ENCODE measurements at regions of chr1 and their contacts with region 1.

Region 1: GRCh38 chr1:205750138-205751035 is at the start of gene NUCKS1:
- DNase-seq: peak; percentile 91 to 99 (median 96)
- ATAC-seq: peak; percentile 77
- H3K4me3 ChIP-seq: peak within 1 kb of the TSS; percentile 78 to 91
- H3K4me3 Mint-ChIP-seq: peak within 1 kb of the TSS; percentile 93
- H3K27ac ChIP-seq: peak within 1 kb of the TSS; percentile 79 to 82
- H3K27ac Mint-ChIP-seq: peak within 1 kb of the TSS; percentile 98
- H3K4me1 ChIP-seq: peaks cover 30% of the 10 kb centered on the region
- H3K4me1 Mint-ChIP-seq: peaks cover 37% of the 10 kb centered on the region
- H3K27me3 ChIP-seq: no peaks in the 10 kb centered on the region
- H3K27me3 Mint-ChIP-seq: no peaks in the 10 kb centered on the region
- CTCF ChIP-seq: no peak
- total RNA-seq, gene NUCKS1: 70.5 to 95.3 TPM

Region 2: DNA sequence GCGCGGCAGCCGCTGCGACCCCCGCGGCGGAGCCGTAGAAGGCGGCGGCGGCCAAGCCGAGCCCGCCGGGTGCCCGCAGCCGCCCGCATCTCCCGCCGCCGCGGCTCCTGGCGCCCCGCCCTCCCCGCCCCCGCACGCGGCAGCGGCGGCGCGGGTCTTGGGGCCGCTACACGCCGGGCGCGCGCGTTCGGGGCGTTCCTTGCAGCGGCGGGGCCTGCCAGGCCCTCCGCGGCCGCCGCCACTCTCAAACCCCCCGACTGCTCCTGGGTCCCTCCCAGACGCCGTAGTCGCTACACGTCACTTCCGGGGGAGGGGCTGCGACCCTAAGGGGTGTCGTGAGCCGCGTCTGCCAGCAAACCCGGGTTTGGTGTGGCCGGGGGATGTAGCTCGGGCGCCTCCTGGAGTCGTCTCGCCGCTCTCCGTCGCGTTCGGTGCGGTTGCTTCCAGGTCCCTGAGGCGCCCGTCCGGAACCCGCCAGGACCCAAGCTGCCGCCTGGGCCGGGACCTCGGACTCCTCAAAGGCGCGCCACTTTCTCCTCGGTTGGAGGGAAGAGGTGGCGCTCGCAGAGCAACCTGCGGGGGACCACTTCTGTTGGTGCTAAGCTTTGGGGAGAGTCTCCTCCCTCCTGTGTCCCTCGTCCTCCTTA is 118.5 kb before region 1 on chr1 and contains the start of gene ELK4:
- CTCF ChIA-PET with region 1: no interaction called
- POLR2A ChIA-PET with region 1: interaction called, 4 read pairs
- intact Hi-C with region 1: loop called (anchors 1 kb)
- DNase-seq: peak; percentile 99 to 100 (median 100)
- ATAC-seq: peak; percentile 78
- H3K4me3 ChIP-seq: peak within 1 kb of the TSS; percentile 64 to 71
- H3K4me3 Mint-ChIP-seq: peak within 1 kb of the TSS; percentile 89
- H3K27ac ChIP-seq: peak within 1 kb of the TSS; percentile 75 to 95
- H3K27ac Mint-ChIP-seq: peak within 1 kb of the TSS; percentile 99
- H3K4me1 ChIP-seq: peaks cover 37% of the 10 kb centered on the region
- H3K4me1 Mint-ChIP-seq: peaks cover 44% of the 10 kb centered on the region
- H3K27me3 ChIP-seq: no peaks in the 10 kb centered on the region
- H3K27me3 Mint-ChIP-seq: no peaks in the 10 kb centered on the region
- CTCF ChIP-seq: peak; percentile 78
- total RNA-seq, gene ELK4: 142 to 147 TPM

Region 3: GRCh38 chr1:205645519-205645918 is 104.9 kb before region 1 on chr1:
- CTCF ChIA-PET with region 1: no interaction called
- POLR2A ChIA-PET with region 1: no interaction called
- intact Hi-C with region 1: no loop called
- DNase-seq: no peak
- ATAC-seq: no peak
- H3K4me3 ChIP-seq: no peak overlapping the region
- H3K4me3 Mint-ChIP-seq: no peak overlapping the region
- H3K27ac ChIP-seq: no peak overlapping the region
- H3K27ac Mint-ChIP-seq: no peak overlapping the region
- H3K4me1 ChIP-seq: no peaks in the 10 kb centered on the region
- H3K4me1 Mint-ChIP-seq: no peaks in the 10 kb centered on the region
- H3K27me3 ChIP-seq: no peaks in the 10 kb centered on the region
- H3K27me3 Mint-ChIP-seq: peaks cover 8% of the 10 kb centered on the region
- CTCF ChIP-seq: no peak

Region 4: GRCh38 chr1:205711104-205712020 is 39.0 kb before region 1 on chr1:
- CTCF ChIA-PET with region 1: interaction called, 6 read pairs
- POLR2A ChIA-PET with region 1: no interaction called
- intact Hi-C with region 1: loop called in 1 of 2 experiments (anchors 1 kb)
- DNase-seq: peak in 8 of 9 experiments; percentile 34 to 86 (median 66)
- ATAC-seq: peak; percentile 95
- H3K4me3 ChIP-seq: no peak overlapping the region
- H3K4me3 Mint-ChIP-seq: no peak overlapping the region
- H3K27ac ChIP-seq: no peak overlapping the region
- H3K27ac Mint-ChIP-seq: no peak overlapping the region
- H3K4me1 ChIP-seq: no peaks in the 10 kb centered on the region
- H3K4me1 Mint-ChIP-seq: peaks cover 13% of the 10 kb centered on the region
- H3K27me3 ChIP-seq: no peaks in the 10 kb centered on the region
- H3K27me3 Mint-ChIP-seq: no peaks in the 10 kb centered on the region
- CTCF ChIP-seq: peak; percentile 90

Region 5: DNA sequence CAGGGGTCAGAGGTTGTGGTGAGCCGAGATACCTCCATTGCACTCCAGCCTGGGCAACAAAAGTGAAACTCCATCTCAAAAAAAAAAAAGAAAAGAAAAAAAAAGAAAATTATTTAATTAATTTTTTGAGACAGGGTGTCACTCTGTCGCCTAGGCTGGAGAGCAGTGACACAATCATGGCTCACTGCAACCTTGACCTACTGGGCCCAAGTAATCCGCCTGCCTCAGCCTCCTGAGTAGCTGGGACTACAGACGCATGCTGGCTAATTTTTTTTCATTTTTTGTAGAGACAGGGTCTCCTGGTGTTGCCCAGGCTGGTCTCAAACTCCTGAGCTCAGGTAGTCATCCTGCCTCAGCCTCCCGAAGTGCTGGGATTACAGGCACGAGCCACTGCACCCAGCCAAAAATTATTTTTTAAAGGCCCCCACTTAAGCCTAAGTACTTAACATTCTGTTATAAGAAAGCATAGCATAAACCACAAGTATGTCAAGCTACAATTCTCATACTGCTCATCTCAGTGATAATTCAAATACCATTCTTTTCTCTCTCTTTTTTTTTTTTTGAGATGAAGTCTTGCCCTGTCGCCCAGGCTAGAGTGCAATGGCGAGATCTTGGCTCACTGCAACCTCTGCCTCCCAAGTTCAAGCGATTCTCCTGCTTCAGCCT is 20.3 kb before region 1 on chr1:
- CTCF ChIA-PET with region 1: interaction called, 4 read pairs
- POLR2A ChIA-PET with region 1: interaction called, 12 read pairs
- intact Hi-C with region 1: no loop called
- DNase-seq: no peak
- ATAC-seq: no peak
- H3K4me3 ChIP-seq: no peak overlapping the region
- H3K4me3 Mint-ChIP-seq: no peak overlapping the region
- H3K27ac ChIP-seq: no peak overlapping the region
- H3K27ac Mint-ChIP-seq: no peak overlapping the region
- H3K4me1 ChIP-seq: peaks cover 3% of the 10 kb centered on the region
- H3K4me1 Mint-ChIP-seq: peaks cover 55% of the 10 kb centered on the region
- H3K27me3 ChIP-seq: no peaks in the 10 kb centered on the region
- H3K27me3 Mint-ChIP-seq: no peaks in the 10 kb centered on the region
- CTCF ChIP-seq: no peak

Region 6: GRCh38 chr1:205766038-205766437 is 15.7 kb after region 1 on chr1:
- CTCF ChIA-PET with region 1: no interaction called
- POLR2A ChIA-PET with region 1: interaction called, 13 read pairs
- intact Hi-C with region 1: no loop called
- DNase-seq: no peak
- ATAC-seq: no peak
- H3K4me3 ChIP-seq: no peak overlapping the region
- H3K4me3 Mint-ChIP-seq: no peak overlapping the region
- H3K27ac ChIP-seq: no peak overlapping the region
- H3K27ac Mint-ChIP-seq: peak overlapping the region; percentile 75
- H3K4me1 ChIP-seq: no peaks in the 10 kb centered on the region
- H3K4me1 Mint-ChIP-seq: peaks cover 12% of the 10 kb centered on the region
- H3K27me3 ChIP-seq: no peaks in the 10 kb centered on the region
- H3K27me3 Mint-ChIP-seq: no peaks in the 10 kb centered on the region
- CTCF ChIP-seq: no peak

Region 7: GRCh38 chr1:205812878-205813754 is 62.7 kb after region 1 on chr1 and contains the start of gene SLC41A1:
- CTCF ChIA-PET with region 1: no interaction called
- POLR2A ChIA-PET with region 1: interaction called, 8 read pairs
- intact Hi-C with region 1: loop called (anchors 1 kb)
- DNase-seq: peak; percentile 82 to 97 (median 92)
- ATAC-seq: peak; percentile 94
- H3K4me3 ChIP-seq: peak within 1 kb of the TSS; percentile 78 to 82
- H3K4me3 Mint-ChIP-seq: peak within 1 kb of the TSS; percentile 91
- H3K27ac ChIP-seq: peak within 1 kb of the TSS; percentile 43 to 64
- H3K27ac Mint-ChIP-seq: peak within 1 kb of the TSS; percentile 84
- H3K4me1 ChIP-seq: peaks cover 51% of the 10 kb centered on the region
- H3K4me1 Mint-ChIP-seq: peaks cover 58% of the 10 kb centered on the region
- H3K27me3 ChIP-seq: no peaks in the 10 kb centered on the region
- H3K27me3 Mint-ChIP-seq: no peaks in the 10 kb centered on the region
- CTCF ChIP-seq: no peak
- total RNA-seq, gene SLC41A1: 36.8 to 41.7 TPM

Region 8: DNA sequence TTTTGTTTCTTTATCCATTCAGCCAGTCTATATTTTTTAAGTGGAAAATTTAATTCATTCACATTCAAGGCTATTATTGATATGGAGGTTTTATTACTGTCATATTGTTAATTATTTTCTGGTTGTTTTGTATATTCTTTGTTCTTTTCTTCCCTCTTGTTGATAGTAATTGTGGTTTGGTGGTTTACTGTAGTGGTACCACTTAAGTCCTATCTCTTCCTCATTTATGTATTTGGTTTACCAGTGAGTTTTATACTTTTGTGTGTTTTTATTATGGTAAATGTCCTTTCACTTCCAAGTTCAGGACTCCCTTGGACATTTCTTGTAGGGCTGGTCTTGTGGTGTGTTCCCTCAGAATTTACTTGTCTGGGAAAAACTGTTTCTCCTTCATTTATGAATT is 127.6 kb after region 1 on chr1:
- CTCF ChIA-PET with region 1: no interaction called
- POLR2A ChIA-PET with region 1: no interaction called
- intact Hi-C with region 1: no loop called
- DNase-seq: no peak
- ATAC-seq: no peak
- H3K4me3 ChIP-seq: no peak overlapping the region
- H3K4me3 Mint-ChIP-seq: no peak overlapping the region
- H3K27ac ChIP-seq: no peak overlapping the region
- H3K27ac Mint-ChIP-seq: no peak overlapping the region
- H3K4me1 ChIP-seq: no peaks in the 10 kb centered on the region
- H3K4me1 Mint-ChIP-seq: no peaks in the 10 kb centered on the region
- H3K27me3 ChIP-seq: no peaks in the 10 kb centered on the region
- H3K27me3 Mint-ChIP-seq: no peaks in the 10 kb centered on the region
- CTCF ChIP-seq: no peak

Region 9: DNA sequence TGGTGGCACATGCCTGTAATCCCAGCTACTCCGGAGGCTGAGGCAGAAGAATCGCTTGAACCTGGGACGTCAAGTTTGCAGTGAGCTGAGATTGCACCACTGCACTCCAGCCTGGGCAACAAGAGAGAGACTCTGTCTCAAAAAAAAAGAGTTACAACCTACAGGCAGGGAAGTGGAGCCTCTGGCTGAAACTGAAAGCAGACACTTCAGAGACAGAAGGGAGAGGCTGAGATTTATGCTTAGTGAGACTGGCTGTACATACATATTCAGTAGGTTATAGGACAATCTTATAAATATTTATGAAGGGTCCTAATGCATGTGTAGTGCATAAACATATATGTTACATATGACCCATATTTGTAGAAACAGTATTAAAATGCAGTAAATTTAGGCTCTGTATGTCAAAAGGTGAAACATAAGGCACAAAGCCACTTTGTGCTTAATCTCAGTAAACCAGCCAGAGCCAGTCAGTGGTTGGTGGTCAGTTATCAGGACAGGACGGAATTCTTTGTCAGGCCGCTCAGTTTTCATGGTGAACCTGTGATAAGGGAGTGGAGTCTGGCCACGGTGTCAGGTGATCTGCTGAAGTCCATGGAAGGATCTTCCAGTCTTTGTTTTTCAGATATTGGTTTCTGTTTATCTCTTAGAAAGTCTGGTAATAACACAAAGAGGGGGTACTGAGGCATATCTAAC is 316.2 kb after region 1 on chr1:
- CTCF ChIA-PET with region 1: no interaction called
- POLR2A ChIA-PET with region 1: no interaction called
- intact Hi-C with region 1: no loop called
- DNase-seq: no peak
- ATAC-seq: no peak
- H3K4me3 ChIP-seq: no peak overlapping the region
- H3K4me3 Mint-ChIP-seq: no peak overlapping the region
- H3K27ac ChIP-seq: no peak overlapping the region
- H3K27ac Mint-ChIP-seq: no peak overlapping the region
- H3K4me1 ChIP-seq: no peaks in the 10 kb centered on the region
- H3K4me1 Mint-ChIP-seq: peaks cover 8% of the 10 kb centered on the region
- H3K27me3 ChIP-seq: no peaks in the 10 kb centered on the region
- H3K27me3 Mint-ChIP-seq: peaks cover 6% of the 10 kb centered on the region
- CTCF ChIP-seq: no peak

Region 10: GRCh38 chr1:207052911-207053769 is 1302.8 kb after region 1 on chr1 and contains the start of gene PFKFB2:
- CTCF ChIA-PET with region 1: no interaction called
- POLR2A ChIA-PET with region 1: no interaction called
- intact Hi-C with region 1: loop called in 1 of 2 experiments (anchors 5 kb)
- DNase-seq: peak; percentile 88 to 97 (median 95)
- ATAC-seq: peak; percentile 87
- H3K4me3 ChIP-seq: peak within 1 kb of the TSS; percentile 70 to 82
- H3K4me3 Mint-ChIP-seq: peak within 1 kb of the TSS; percentile 97
- H3K27ac ChIP-seq: peak within 1 kb of the TSS; percentile 70 to 83
- H3K27ac Mint-ChIP-seq: peak within 1 kb of the TSS; percentile 98
- H3K4me1 ChIP-seq: peaks cover 28% of the 10 kb centered on the region
- H3K4me1 Mint-ChIP-seq: peaks cover 44% of the 10 kb centered on the region
- H3K27me3 ChIP-seq: no peaks in the 10 kb centered on the region
- H3K27me3 Mint-ChIP-seq: no peaks in the 10 kb centered on the region
- CTCF ChIP-seq: peak; percentile 21
- total RNA-seq, gene PFKFB2: 8.1 to 8.5 TPM

Measured in CD8-positive, alpha-beta T cell (primary cell).